Activated CD8-positive, alpha-beta memory T cell treated with anti-CD3 and anti-CD28 coated beads, Interleukin-2, amount 10 ng/mL, durations not matched to agents 7 days and 5 days (primary cell): ENCODE measurements at regions of chr22 and their contacts with region 1.

Region 1: DNA sequence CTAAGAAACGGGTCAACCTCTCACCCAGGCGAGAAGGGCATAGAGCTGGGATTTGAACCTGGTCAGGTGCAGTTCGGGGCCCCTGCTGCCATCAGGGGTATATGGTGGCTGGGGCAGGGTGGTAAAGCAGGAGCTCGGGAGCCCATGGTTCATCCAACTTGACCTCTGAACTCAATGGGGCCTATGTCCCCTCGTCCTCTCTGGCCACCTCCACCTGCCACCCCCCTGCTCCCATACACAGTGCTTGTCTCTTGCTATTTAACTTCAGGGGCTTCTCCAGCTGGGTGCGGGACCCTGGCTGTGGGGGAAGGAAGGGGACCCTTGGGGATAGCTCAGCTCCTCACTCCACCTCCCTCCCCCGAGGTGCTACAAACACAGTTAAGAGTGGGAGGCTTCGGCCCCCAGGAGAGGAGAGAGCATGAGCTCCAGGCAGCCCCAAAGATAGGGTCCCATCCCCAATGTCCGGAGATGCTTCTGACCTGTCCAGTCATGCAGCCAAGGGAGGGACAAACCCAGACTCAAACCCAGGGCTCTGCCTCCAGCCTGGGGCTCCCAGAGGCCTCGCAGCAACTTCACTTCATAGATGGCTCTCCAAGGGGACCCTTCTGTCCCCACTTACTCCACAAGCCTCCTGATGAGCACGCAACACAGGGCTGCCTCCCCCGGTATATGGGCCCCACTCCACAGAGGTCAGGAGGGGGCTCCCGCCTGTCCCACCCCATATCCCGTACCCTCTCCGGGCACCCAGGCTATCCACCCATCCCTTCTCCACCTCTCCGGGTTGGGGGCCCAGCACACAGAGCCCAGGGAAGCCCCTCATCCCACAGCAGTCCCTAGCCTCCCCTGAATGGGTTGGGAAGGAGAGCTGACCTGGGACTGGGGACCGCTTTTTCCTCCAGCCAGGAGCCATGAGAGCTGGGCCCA is 712 bp downstream of the IL2RB start:
- DNase-seq: no peak
- ATAC-seq: no peak
- H3K4me3 Mint-ChIP-seq: peak overlapping the region; percentile 100
- H3K27ac Mint-ChIP-seq: peak overlapping the region; percentile 99
- H3K4me1 Mint-ChIP-seq: peaks cover 57% of the 10 kb centered on the region
- H3K27me3 Mint-ChIP-seq: no peaks in the 10 kb centered on the region

Region 2: DNA sequence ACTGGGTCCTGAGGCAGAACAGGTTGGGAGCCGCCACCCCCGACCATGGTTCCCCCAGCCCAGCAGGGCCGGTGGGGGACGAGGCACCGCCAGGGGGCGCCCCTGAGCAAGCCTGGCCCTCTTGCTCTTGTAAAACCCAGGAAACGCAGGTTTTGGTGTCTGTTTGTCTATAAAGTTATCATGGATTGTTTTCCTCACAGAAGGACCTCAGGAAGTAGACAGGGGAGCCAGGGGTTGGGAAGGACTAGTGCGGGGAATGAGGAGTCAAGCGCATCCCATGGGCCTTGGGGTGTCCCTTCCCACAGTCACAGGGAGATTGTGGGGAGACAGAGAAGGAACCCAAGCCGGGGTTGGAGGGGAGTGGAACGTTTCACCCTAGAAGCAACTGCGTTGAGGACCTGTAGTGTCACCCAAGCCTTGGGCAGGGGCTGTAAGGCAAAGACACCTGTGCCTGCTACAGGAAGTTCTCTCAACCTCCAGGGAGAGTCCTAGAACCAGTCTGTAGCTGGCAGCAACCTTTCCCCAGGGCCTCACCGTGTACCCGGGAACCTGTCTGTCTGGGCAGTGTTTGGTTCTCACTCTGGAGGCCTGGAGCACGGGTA is 71.0 kb before region 1 on chr22:
- CTCF ChIA-PET with region 1: interaction called, 34 read pairs
- DNase-seq: peak; percentile 90
- ATAC-seq: peak; percentile 16
- H3K4me3 Mint-ChIP-seq: peak overlapping the region; percentile 32
- H3K27ac Mint-ChIP-seq: peak overlapping the region; percentile 99
- H3K4me1 Mint-ChIP-seq: peaks cover 69% of the 10 kb centered on the region
- H3K27me3 Mint-ChIP-seq: no peaks in the 10 kb centered on the region

Region 3: GRCh38 chr22:37121887-37122591 is 27.0 kb before region 1 on chr22:
- CTCF ChIA-PET with region 1: interaction called, 137 read pairs
- DNase-seq: peak; percentile 98
- ATAC-seq: peak; percentile 97
- H3K4me3 Mint-ChIP-seq: peak overlapping the region; percentile 70
- H3K27ac Mint-ChIP-seq: peak overlapping the region; percentile 99
- H3K4me1 Mint-ChIP-seq: peaks cover 72% of the 10 kb centered on the region
- H3K27me3 Mint-ChIP-seq: no peaks in the 10 kb centered on the region

Region 4: GRCh38 chr22:37193629-37194191 is 44.7 kb after region 1 on chr22:
- CTCF ChIA-PET with region 1: interaction called, 51 read pairs
- DNase-seq: peak; percentile 70
- ATAC-seq: peak; percentile 27
- H3K4me3 Mint-ChIP-seq: peak overlapping the region; percentile 39
- H3K27ac Mint-ChIP-seq: peak overlapping the region; percentile 82
- H3K4me1 Mint-ChIP-seq: peaks cover 47% of the 10 kb centered on the region
- H3K27me3 Mint-ChIP-seq: no peaks in the 10 kb centered on the region